ENCODE measurements at regions of chr11 and their contacts with region 1.

Region 1: GRCh38 chr11:31397239-31397834 is 27.7 kb downstream of the DNAJC24 start:
- DNase-seq: no peak
- ATAC-seq: no peak
- H3K4me3 Mint-ChIP-seq: no peak overlapping the region
- H3K27ac Mint-ChIP-seq: no peak overlapping the region
- H3K4me1 Mint-ChIP-seq: no peaks in the 10 kb centered on the region
- H3K27me3 Mint-ChIP-seq: no peaks in the 10 kb centered on the region
- CTCF ChIP-seq: peak; percentile 28

Region 2: DNA sequence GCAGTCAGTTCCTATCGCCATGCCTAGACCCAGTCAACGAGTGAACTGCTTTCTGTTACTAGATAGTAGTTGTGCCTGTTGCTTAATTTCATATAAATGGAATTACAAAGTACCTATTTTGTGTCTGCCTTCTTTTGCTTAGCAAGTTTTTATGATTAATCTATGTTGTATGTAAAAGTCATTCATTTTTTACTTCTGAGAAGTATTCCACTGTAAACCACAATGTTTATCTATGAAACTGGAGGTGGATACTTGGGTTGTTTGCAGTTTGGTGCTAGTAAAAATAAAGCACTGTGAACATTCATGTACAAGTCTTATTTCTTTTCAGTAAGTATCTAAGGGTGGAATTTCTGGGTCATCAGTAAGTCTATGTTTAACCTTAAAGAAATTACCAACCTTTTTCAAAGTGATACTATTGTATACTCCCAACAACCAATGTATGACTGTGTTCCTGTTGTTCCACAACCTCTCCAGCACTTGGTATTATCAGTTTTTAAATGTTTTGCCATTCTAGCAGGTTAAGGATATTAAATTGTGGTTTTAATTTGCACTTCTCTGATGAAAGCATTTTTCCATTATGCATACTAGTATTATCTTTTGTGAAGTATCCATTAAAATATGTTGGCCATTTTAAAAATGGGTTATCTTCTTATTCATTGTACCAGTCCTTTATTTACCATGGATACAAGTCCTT is 40.6 kb after region 1 on chr11:
- CTCF ChIA-PET with region 1: no interaction called
- POLR2A ChIA-PET with region 1: no interaction called
- intact Hi-C with region 1: no loop called
- DNase-seq: no peak
- ATAC-seq: no peak
- H3K4me3 Mint-ChIP-seq: no peak overlapping the region
- H3K27ac Mint-ChIP-seq: no peak overlapping the region
- H3K4me1 Mint-ChIP-seq: no peaks in the 10 kb centered on the region
- H3K27me3 Mint-ChIP-seq: no peaks in the 10 kb centered on the region
- CTCF ChIP-seq: no peak

Region 3: GRCh38 chr11:31870609-31871309 is 473.4 kb after region 1 on chr11:
- CTCF ChIA-PET with region 1: no interaction called
- POLR2A ChIA-PET with region 1: no interaction called
- intact Hi-C with region 1: loop called (anchors 2 kb)
- DNase-seq: no peak
- ATAC-seq: no peak
- H3K4me3 Mint-ChIP-seq: no peak overlapping the region
- H3K27ac Mint-ChIP-seq: no peak overlapping the region
- H3K4me1 Mint-ChIP-seq: no peaks in the 10 kb centered on the region
- H3K27me3 Mint-ChIP-seq: peaks cover 11% of the 10 kb centered on the region
- CTCF ChIP-seq: no peak

Region 4: GRCh38 chr11:31958076-31958735 is 560.9 kb after region 1 on chr11:
- CTCF ChIA-PET with region 1: interaction called, 3 read pairs
- POLR2A ChIA-PET with region 1: no interaction called
- intact Hi-C with region 1: loop called (anchors 2 kb)
- DNase-seq: no peak
- ATAC-seq: no peak
- H3K4me3 Mint-ChIP-seq: no peak overlapping the region
- H3K27ac Mint-ChIP-seq: no peak overlapping the region
- H3K4me1 Mint-ChIP-seq: no peaks in the 10 kb centered on the region
- H3K27me3 Mint-ChIP-seq: no peaks in the 10 kb centered on the region
- CTCF ChIP-seq: no peak

Region 5: GRCh38 chr11:32006799-32007388 is 609.6 kb after region 1 on chr11:
- CTCF ChIA-PET with region 1: interaction called, 3 read pairs
- POLR2A ChIA-PET with region 1: no interaction called
- intact Hi-C with region 1: loop called (anchors 5 kb)
- DNase-seq: no peak
- ATAC-seq: peak; percentile 64
- H3K4me3 Mint-ChIP-seq: no peak overlapping the region
- H3K27ac Mint-ChIP-seq: no peak overlapping the region
- H3K4me1 Mint-ChIP-seq: no peaks in the 10 kb centered on the region
- H3K27me3 Mint-ChIP-seq: peaks cover 24% of the 10 kb centered on the region
- CTCF ChIP-seq: no peak

Measured in activated B cell treated with CpG ODN at 0.5 μM for 24 hours (primary cell).